ENCODE measurements at regions of chr16 and their contacts with region 1.

Region 1: DNA sequence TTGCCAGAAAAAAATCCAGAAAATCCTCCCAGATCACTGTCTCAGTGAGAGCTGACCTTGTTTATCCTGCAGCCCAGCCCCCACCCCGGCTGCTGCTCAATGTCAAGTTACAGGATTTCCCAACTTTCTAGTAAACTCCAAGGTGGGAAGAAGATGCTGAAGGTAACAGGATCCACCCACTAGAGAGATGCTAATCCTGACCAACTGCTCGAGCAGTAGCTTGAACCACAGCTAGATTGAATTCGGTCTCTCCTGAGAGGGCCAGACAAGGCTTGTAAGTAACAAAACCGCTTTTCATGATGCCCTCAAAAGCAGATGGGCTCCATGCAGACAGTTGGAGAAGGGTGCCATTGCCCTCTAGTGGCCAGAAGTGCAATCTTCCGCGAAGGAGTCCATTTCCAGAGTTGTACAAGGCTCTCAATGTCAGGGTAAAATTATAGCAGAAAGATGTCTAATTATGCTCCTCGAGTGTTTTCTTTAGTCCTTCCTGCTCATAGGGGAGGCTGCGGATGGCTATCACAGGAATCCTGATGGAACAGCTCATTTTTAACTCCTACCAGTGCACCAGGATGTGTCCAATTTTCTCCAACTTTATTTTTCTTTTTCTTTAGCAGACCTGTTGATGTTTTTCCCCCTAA is 3.9 kb downstream of the CDH11 start:
- DNase-seq: peak in 2 of 9 donors; percentile 5 to 8
- ATAC-seq: peak; percentile 51
- H3K4me3 ChIP-seq: no peak overlapping the region
- H3K4me3 Mint-ChIP-seq: no peak overlapping the region
- H3K27ac ChIP-seq: no peak overlapping the region
- H3K27ac Mint-ChIP-seq: no peak overlapping the region
- H3K4me1 ChIP-seq: no peaks in the 10 kb centered on the region
- H3K4me1 Mint-ChIP-seq: peaks cover 0 to 5% (median 0%) of the 10 kb centered on the region in 7 donors
- H3K27me3 ChIP-seq: no peaks in the 10 kb centered on the region
- H3K27me3 Mint-ChIP-seq: peaks cover 15 to 32% (median 16%) of the 10 kb centered on the region in 5 donors

Region 2: DNA sequence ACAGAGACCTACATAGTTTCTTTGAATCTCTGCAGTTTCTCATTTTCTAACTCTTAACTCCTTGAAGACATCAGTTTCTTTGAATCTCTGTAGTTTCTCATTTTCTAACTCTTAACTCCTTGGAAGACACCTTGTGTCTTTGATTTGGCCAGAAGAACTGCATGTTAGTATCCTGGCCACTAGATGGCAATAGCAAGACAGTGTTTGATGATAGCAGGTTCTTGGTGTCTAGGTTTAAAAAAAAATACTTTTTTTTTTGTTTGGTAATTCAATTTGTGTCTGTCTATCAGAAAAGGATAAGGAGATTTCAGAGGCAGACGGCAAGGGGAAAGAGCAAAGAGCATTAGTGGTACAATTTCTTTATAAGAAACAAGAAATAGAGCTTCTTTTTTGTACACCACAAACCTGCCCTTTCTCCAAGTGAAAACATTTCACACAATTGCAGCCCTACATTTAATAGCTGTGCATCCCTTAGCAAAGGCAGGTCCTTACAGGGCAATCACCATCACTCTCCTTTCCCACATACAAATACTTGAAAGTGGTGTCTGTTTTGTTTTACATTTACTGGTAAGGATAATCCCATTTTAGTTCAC is 1756.8 kb before region 1 on chr16:
- CTCF ChIA-PET with region 1: no interaction called
- POLR2A ChIA-PET with region 1: no interaction called
- intact Hi-C with region 1: loop called (anchors 5 kb)
- DNase-seq: no peak
- ATAC-seq: no peak
- H3K4me3 ChIP-seq: no peak overlapping the region
- H3K4me3 Mint-ChIP-seq: no peak overlapping the region
- H3K27ac ChIP-seq: no peak overlapping the region
- H3K27ac Mint-ChIP-seq: no peak overlapping the region
- H3K4me1 ChIP-seq: no peaks in the 10 kb centered on the region
- H3K4me1 Mint-ChIP-seq: no peaks in the 10 kb centered on the region
- H3K27me3 ChIP-seq: no peaks in the 10 kb centered on the region
- H3K27me3 Mint-ChIP-seq: no peaks in the 10 kb centered on the region

Region 3: DNA sequence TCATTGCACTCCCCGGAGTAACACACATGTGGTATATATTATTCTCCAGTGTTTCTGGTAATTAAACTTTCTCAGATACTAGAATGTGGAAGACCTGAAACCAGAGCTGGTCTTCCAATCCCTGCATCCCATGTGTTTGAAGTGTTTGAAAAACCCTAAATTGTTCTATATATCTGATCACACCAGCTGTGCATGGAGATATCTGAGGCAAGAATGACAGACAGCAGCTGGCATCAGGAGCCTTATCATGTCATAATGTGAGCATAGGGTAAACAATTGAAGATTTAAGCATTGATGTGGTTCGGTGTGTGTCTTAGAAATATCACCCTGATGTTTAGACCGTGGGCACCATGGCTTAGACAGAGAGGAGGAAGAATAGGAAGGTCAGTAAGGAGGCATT is 247.1 kb before region 1 on chr16:
- CTCF ChIA-PET with region 1: no interaction called
- POLR2A ChIA-PET with region 1: no interaction called
- intact Hi-C with region 1: no loop called
- DNase-seq: no peak
- ATAC-seq: no peak
- H3K4me3 ChIP-seq: no peak overlapping the region
- H3K4me3 Mint-ChIP-seq: no peak overlapping the region
- H3K27ac ChIP-seq: no peak overlapping the region
- H3K27ac Mint-ChIP-seq: no peak overlapping the region
- H3K4me1 ChIP-seq: no peaks in the 10 kb centered on the region
- H3K4me1 Mint-ChIP-seq: no peaks in the 10 kb centered on the region
- H3K27me3 ChIP-seq: no peaks in the 10 kb centered on the region
- H3K27me3 Mint-ChIP-seq: no peaks in the 10 kb centered on the region

Measured in naive thymus-derived CD4-positive, alpha-beta T cell (primary cell).